K562 (cell line): ENCODE measurements at regions of chr7 and their contacts with region 1.

Region 1: GRCh38 chr7:143008007-143008901 is 18.7 kb downstream of the OR9A2 start:
- DNase-seq: peak; percentile 83 to 96 (median 92)
- ATAC-seq: peak; percentile 97
- H3K4me3 ChIP-seq: no peak overlapping the region
- H3K27ac ChIP-seq: no peak overlapping the region
- H3K4me1 ChIP-seq: no peaks in the 10 kb centered on the region
- H3K27me3 ChIP-seq: peaks cover 14 to 26% of the 10 kb centered on the region in 2 experiments
- CTCF ChIP-seq: peak; percentile 98
- EP300 ChIP-seq: no peak
- POLR2A ChIP-seq: no peak
- RAD21 ChIP-seq: peak; percentile 97

Region 2: GRCh38 chr7:142301923-142302550 is 706.2 kb before region 1 on chr7:
- CTCF ChIA-PET with region 1: no interaction called
- POLR2A ChIA-PET with region 1: no interaction called
- in situ Hi-C with region 1: no loop called
- intact Hi-C with region 1: no loop called
- DNase-seq: peak in 3 of 4 experiments; percentile 12 to 42 (median 40)
- ATAC-seq: peak; percentile 58; the same call in 2 of the 3 replicates
- H3K4me3 ChIP-seq: no peak overlapping the region
- H3K27ac ChIP-seq: no peak overlapping the region
- H3K4me1 ChIP-seq: no peaks in the 10 kb centered on the region
- H3K27me3 ChIP-seq: no peaks in the 10 kb centered on the region
- CTCF ChIP-seq: peak; percentile 42 to 57 (median 53)
- EP300 ChIP-seq: no peak
- POLR2A ChIP-seq: no peak
- RAD21 ChIP-seq: peak in 1 of 2 experiments; percentile 34; a peak in 2 of 4 replicates

Region 3: DNA sequence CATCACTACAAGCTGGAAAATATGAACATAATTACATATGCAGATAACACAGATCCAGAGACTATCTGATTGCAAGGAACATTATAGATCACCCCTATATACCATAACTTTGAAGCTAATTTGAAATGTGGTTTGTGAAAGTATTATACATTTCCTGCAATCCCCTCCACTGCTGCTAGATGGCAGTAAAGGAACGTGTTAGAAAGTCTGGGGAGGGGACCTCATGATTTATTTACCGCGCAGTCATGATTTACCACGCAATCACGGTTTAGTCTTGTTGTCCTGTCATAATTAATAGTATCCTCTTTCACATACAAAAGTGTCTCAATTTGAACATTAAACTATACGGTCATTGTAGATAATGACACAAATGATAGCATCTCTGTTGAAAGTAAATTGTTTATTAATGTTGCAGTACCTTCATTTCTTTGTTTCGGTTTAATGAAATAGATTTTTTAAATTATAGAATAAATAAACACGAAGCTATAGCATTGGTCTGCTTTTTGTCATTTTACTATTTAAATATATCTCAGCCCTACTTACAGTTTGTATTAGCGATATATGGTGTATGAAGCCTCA is 404.3 kb before region 1 on chr7:
- CTCF ChIA-PET with region 1: interaction called, 11 read pairs
- POLR2A ChIA-PET with region 1: no interaction called
- in situ Hi-C with region 1: no loop called
- intact Hi-C with region 1: loop called (anchors 2 kb)
- DNase-seq: peak; percentile 75 to 83 (median 80)
- ATAC-seq: peak; percentile 80
- H3K4me3 ChIP-seq: no peak overlapping the region
- H3K27ac ChIP-seq: no peak overlapping the region
- H3K4me1 ChIP-seq: no peaks in the 10 kb centered on the region; a peak in 1 of 5 replicates
- H3K27me3 ChIP-seq: peaks cover 2 to 10% of the 10 kb centered on the region in 2 experiments; a peak in 2 of 5 replicates
- CTCF ChIP-seq: peak; percentile 85 to 94 (median 90)
- EP300 ChIP-seq: no peak
- POLR2A ChIP-seq: no peak
- RAD21 ChIP-seq: peak; percentile 84 to 93

Region 4: GRCh38 chr7:142853739-142854371 is 154.4 kb before region 1 on chr7:
- CTCF ChIA-PET with region 1: interaction called, 52 read pairs
- POLR2A ChIA-PET with region 1: no interaction called
- in situ Hi-C with region 1: no loop called
- intact Hi-C with region 1: loop called (anchors 1 kb)
- DNase-seq: peak; percentile 74 to 88 (median 80)
- ATAC-seq: peak; percentile 82
- H3K4me3 ChIP-seq: peak overlapping the region; percentile 70
- H3K27ac ChIP-seq: no peak overlapping the region; the same call in 2 of the 3 replicates
- H3K4me1 ChIP-seq: peaks cover 7 to 16% of the 10 kb centered on the region in 2 experiments; a peak in 3 of 5 replicates
- H3K27me3 ChIP-seq: peaks cover 4 to 26% of the 10 kb centered on the region in 2 experiments; a peak in 3 of 5 replicates
- CTCF ChIP-seq: peak; percentile 92 to 95 (median 93)
- EP300 ChIP-seq: no peak
- POLR2A ChIP-seq: no peak
- RAD21 ChIP-seq: peak; percentile 89 to 94

Region 5: GRCh38 chr7:142880876-142881505 is 127.3 kb before region 1 on chr7:
- CTCF ChIA-PET with region 1: interaction called, 65 read pairs
- POLR2A ChIA-PET with region 1: interaction called, 4 read pairs
- in situ Hi-C with region 1: loop called (anchors 5 kb)
- intact Hi-C with region 1: loop called (anchors 1 kb)
- DNase-seq: peak; percentile 76 to 87 (median 84)
- ATAC-seq: peak; percentile 82
- H3K4me3 ChIP-seq: no peak overlapping the region
- H3K27ac ChIP-seq: no peak overlapping the region
- H3K4me1 ChIP-seq: peaks cover 0 to 4% of the 10 kb centered on the region in 2 experiments; a peak in 1 of 5 replicates
- H3K27me3 ChIP-seq: peaks cover 54 to 89% of the 10 kb centered on the region in 2 experiments
- CTCF ChIP-seq: peak; percentile 92 to 98 (median 93)
- EP300 ChIP-seq: no peak
- POLR2A ChIP-seq: no peak
- RAD21 ChIP-seq: peak; percentile 75 to 80

Region 6: DNA sequence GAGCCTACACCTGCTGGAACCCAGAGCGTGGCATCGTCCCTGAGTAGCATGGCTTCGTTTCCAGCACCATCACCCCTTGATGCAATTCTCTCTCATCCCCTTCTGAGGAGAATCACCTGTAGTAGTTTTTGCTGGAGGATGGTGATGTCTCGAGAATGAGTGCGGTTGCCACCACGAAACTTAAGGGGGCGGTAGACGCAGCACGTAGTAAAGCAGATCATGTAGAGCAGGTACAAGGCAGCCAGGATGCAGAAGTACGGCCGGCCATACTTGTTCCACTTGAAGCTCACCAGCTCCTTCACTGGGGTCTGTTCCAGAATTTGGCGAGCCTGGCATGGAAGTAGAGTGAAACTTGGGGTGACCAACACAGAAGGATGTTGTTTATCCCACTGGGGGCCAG is 82.8 kb before region 1 on chr7:
- CTCF ChIA-PET with region 1: interaction called, 11 read pairs
- POLR2A ChIA-PET with region 1: no interaction called
- in situ Hi-C with region 1: no loop called
- intact Hi-C with region 1: loop called (anchors 1 kb)
- DNase-seq: peak; percentile 49 to 57 (median 50)
- ATAC-seq: peak; percentile 89
- H3K4me3 ChIP-seq: no peak overlapping the region
- H3K27ac ChIP-seq: no peak overlapping the region
- H3K4me1 ChIP-seq: no peaks in the 10 kb centered on the region
- H3K27me3 ChIP-seq: peaks cover 21 to 36% of the 10 kb centered on the region in 2 experiments
- CTCF ChIP-seq: peak; percentile 67 to 69 (median 69)
- EP300 ChIP-seq: no peak
- POLR2A ChIP-seq: no peak
- RAD21 ChIP-seq: peak; percentile 29 to 43

Region 7: GRCh38 chr7:143214789-143215679 is 206.8 kb after region 1 on chr7:
- CTCF ChIA-PET with region 1: interaction called, 222 read pairs
- POLR2A ChIA-PET with region 1: interaction called, 7 read pairs
- in situ Hi-C with region 1: loop called (anchors 5 kb)
- intact Hi-C with region 1: loop called (anchors 1 kb)
- DNase-seq: peak; percentile 86 to 92 (median 90)
- ATAC-seq: peak; percentile 97
- H3K4me3 ChIP-seq: no peak overlapping the region
- H3K27ac ChIP-seq: no peak overlapping the region
- H3K4me1 ChIP-seq: no peaks in the 10 kb centered on the region
- H3K27me3 ChIP-seq: peaks cover 6 to 19% of the 10 kb centered on the region in 2 experiments; a peak in 4 of 5 replicates
- CTCF ChIP-seq: peak; percentile 100
- EP300 ChIP-seq: no peak
- POLR2A ChIP-seq: no peak
- RAD21 ChIP-seq: peak; percentile 100